Activated CD4-positive, alpha-beta T cell treated with anti-CD3 and anti-CD28 coated beads, Interleukin-2, amount 10 ng/mL, durations not matched to agents 7 days and 5 days (primary cell): ENCODE measurements at regions of chr16 and their contacts with region 1.

Region 1: GRCh38 chr16:56700195-56700594 is 17.9 kb downstream of the MT1X start:
- DNase-seq: no peak
- H3K4me3 Mint-ChIP-seq: no peak overlapping the region
- H3K27ac Mint-ChIP-seq: no peak overlapping the region
- H3K4me1 Mint-ChIP-seq: peaks cover 11% of the 10 kb centered on the region
- H3K27me3 Mint-ChIP-seq: peaks cover 4% of the 10 kb centered on the region

Region 2: GRCh38 chr16:56571525-56571924 is 128.7 kb before region 1 on chr16:
- CTCF ChIA-PET with region 1: interaction called, 41 read pairs
- POLR2A ChIA-PET with region 1: no interaction called
- DNase-seq: no peak
- H3K4me3 Mint-ChIP-seq: no peak overlapping the region
- H3K27ac Mint-ChIP-seq: no peak overlapping the region
- H3K4me1 Mint-ChIP-seq: no peaks in the 10 kb centered on the region
- H3K27me3 Mint-ChIP-seq: peaks cover 12% of the 10 kb centered on the region

Region 3: GRCh38 chr16:56583351-56584168 is 116.6 kb before region 1 on chr16:
- CTCF ChIA-PET with region 1: interaction called, 41 read pairs
- POLR2A ChIA-PET with region 1: no interaction called
- DNase-seq: no peak
- H3K4me3 Mint-ChIP-seq: no peak overlapping the region
- H3K27ac Mint-ChIP-seq: no peak overlapping the region
- H3K4me1 Mint-ChIP-seq: no peaks in the 10 kb centered on the region
- H3K27me3 Mint-ChIP-seq: peaks cover 47% of the 10 kb centered on the region

Region 4: DNA sequence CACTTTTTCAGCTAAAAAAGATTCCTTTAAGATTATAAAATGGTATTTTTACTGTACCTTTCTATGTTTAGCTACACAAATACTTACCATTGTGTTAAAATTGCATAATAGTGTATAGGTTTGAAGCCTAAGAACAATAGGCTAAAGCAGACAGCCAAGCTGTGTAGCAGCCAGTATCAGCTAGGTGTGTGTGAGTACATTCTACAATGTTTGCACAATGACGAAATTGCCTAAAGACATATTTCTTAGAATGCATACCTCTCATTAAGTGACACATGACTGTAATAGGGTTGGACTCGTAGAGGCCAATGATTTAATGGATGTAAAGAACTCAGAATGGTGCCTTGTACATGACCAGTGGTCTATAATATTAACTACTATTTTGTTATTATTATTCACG is 50.4 kb before region 1 on chr16:
- CTCF ChIA-PET with region 1: no interaction called
- POLR2A ChIA-PET with region 1: no interaction called
- DNase-seq: no peak
- H3K4me3 Mint-ChIP-seq: no peak overlapping the region
- H3K27ac Mint-ChIP-seq: no peak overlapping the region
- H3K4me1 Mint-ChIP-seq: peaks cover 2% of the 10 kb centered on the region
- H3K27me3 Mint-ChIP-seq: peaks cover 57% of the 10 kb centered on the region

Region 5: DNA sequence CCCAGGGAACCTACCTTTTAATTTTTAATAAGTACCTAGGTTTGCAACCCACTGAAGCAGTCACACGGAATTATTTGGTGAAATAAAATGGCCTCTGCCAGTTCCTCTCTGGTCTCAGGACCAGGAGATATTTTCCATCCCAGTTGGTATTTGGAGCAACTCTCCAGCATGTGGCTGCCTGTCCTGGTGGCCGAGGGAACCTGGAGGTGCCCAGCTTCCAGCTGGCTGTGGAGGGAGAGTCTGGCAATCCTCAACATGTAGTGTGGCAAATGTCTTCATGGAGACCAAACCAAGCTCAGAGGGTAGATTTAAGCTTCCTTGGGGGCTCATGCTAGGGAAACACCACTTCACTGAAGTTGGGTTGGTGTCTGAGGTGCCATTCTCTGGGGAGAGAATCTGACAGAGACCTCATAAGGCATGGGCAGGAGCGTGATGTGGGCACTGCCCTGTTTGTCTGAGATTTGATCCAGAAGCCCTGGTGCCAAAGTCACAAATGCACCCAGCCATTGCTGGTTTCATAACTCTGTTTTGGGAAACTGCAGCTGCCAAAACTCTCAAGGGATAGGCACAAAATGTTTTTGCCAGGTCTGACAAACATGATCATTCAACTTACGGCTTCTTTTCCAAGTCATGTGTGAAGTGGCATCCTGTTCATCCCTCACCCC is 15.1 kb before region 1 on chr16:
- CTCF ChIA-PET with region 1: interaction called, 21 read pairs
- POLR2A ChIA-PET with region 1: no interaction called
- DNase-seq: no peak
- H3K4me3 Mint-ChIP-seq: no peak overlapping the region
- H3K27ac Mint-ChIP-seq: no peak overlapping the region
- H3K4me1 Mint-ChIP-seq: peaks cover 26% of the 10 kb centered on the region
- H3K27me3 Mint-ChIP-seq: peaks cover 1% of the 10 kb centered on the region